ENCODE measurements at regions of chr16 and their contacts with region 1.

Region 1: DNA sequence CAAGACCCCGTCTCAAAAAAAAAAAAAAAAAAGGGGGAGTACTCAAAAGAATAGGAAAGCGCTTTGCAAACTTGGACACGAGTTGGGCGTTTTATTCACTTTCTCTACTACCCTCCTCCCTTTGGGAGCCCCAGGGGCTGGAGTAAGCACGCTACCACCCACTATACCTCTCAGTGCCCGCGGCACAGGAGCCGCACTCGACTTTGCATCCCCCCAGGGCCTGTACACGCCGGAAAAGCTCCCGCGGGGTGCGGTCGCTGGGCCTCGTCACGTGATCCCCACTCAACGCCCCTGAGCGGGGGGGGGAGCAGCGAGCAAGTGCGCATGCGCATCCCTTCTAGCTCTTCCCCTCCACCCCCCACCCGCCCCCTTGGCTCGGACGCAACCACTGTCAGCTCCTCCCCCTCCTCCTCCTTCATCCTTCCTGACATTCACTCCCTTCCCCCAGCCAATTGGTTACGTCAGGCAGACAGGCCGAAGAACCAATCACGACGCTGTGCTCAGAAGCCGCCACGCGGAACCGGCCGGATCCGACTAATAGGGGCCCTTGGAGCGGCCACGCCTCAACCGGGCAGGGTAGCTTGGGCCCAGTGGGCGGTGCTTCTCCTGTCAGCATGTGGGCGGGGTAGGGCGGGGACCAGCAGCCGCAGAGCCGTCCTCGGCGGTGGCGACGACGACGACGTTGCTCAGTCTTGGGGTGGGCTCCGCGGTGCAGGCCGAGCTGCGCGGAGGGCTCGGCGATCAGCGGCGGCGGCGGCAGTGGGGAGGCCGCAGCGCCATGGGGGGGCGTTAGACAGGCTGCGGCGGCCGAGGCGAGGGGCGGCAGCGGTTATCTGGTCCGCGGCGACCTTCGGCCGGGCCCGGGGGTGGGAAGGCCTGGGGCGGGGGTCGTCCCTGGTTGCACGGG is at the start of gene HAPSTR1:
- DNase-seq: peak; percentile 98
- ATAC-seq: peak; percentile 93
- H3K4me3 ChIP-seq: peak within 1 kb of the TSS; percentile 92 to 93
- H3K27ac ChIP-seq: peak within 1 kb of the TSS; percentile 96
- H3K4me1 ChIP-seq: peaks cover 25% of the 10 kb centered on the region
- H3K27me3 ChIP-seq: no peaks in the 10 kb centered on the region
- CTCF ChIP-seq: no peak
- total RNA-seq, gene HAPSTR1: 49.9 TPM

Region 2: DNA sequence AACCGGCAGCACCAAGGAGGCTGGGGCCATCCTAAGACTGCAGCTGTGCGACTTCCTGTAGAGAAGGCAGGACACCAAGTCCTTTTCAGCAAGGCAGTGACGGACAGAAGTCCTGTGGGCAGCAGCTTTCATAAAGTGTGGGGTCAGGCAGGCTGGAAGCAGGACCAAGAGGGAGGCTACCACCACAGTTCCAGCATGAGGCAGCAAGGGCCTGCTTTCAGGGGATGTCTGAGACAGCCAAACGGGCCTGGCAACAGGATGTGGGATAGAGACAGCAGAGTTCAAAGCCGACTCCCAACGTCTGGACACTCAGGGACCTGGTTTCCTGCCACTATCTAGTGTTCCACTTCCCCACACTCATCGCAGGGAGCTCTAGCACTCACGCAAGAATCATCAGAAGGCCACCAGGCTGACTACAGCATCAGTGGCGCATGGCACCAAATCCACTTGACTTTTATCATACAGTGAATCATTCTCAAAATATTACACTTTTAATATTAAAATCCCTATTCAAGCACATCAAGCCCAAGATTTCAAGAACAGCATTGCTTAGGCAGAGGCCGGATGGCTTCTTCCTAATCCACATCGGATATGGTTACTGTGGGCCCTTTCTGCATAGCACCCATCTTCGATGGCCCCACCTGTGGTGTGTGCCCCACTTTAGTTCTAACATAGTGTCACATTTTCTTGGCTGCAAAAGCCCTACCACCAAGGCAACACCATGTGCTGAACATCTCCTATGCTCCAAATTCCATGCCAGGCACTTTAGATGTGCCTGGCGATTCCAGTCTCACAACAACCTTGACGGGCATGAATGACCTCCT is 132.7 kb before region 1 on chr16:
- CTCF ChIA-PET with region 1: no interaction called
- POLR2A ChIA-PET with region 1: no interaction called
- in situ Hi-C with region 1: no loop called
- intact Hi-C with region 1: loop called (anchors 10 kb)
- DNase-seq: no peak
- ATAC-seq: peak; percentile 56
- H3K4me3 ChIP-seq: no peak overlapping the region
- H3K27ac ChIP-seq: peak overlapping the region; percentile 72
- H3K4me1 ChIP-seq: peaks cover 56% of the 10 kb centered on the region
- H3K27me3 ChIP-seq: no peaks in the 10 kb centered on the region
- CTCF ChIP-seq: no peak

Region 3: DNA sequence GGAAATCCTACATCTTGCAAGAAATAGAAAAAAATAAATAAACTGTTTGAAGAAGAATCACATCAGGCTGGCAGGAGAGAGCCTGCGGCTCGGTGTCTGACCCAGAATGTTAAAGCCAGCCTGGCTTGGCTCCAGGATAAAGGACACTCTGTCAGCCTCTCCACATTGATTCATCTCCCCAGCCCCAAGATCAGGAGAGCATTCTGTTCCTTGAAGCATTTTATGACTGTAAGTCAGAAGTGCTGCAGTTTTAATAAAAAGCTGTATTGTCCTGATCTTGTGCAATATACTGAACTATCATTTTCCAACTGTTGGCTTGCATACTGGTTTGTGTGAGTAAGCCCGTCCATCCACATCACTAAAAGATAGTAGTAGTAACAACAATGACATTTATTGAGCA is 426.8 kb after region 1 on chr16:
- CTCF ChIA-PET with region 1: no interaction called
- POLR2A ChIA-PET with region 1: no interaction called
- in situ Hi-C with region 1: no loop called
- intact Hi-C with region 1: no loop called
- DNase-seq: no peak
- ATAC-seq: no peak
- H3K4me3 ChIP-seq: no peak overlapping the region
- H3K27ac ChIP-seq: no peak overlapping the region
- H3K4me1 ChIP-seq: no peaks in the 10 kb centered on the region
- H3K27me3 ChIP-seq: peaks cover 6% of the 10 kb centered on the region
- CTCF ChIP-seq: no peak